ENCODE measurements at regions of chr3 and their contacts with region 1.

Region 1: DNA sequence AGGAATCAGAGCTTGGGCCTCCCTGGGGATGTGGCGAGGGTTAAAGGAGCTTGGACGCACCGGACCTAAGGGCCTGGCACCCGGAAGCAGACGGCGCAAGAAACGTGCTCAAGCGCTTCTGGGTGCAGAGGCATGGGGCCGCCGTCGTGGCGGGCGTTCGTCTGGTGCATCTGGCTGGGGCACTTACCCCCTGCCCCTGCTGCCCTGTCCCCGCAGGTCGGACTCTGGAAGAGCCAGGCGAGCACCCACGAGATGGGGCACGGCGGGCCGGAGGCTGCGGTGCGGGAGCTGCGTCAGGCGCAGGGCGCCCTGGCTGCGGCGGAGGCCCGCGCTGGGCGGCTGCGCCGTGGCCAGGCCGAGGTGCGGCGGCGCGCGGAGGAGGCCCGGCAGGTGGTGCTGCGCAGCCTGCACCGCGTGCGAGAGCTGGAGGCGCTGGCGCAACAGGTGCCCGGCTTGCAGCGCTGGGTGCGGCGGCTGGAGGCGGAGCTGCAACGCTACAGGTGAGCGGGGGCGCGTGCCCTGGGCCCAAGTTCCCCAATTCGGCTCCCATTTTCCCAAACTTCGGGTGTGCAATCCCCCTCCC is 2.6 kb downstream of the EFCC1 start:
- DNase-seq: peak in 2 of 3 donors; percentile 65 to 81
- H3K4me3 ChIP-seq: peak overlapping the region in 5 of 7 experiments; percentile 16 to 88 (median 54)
- H3K27ac ChIP-seq: no peak overlapping the region
- H3K4me1 ChIP-seq: peaks cover 5 to 70% (median 62%) of the 10 kb centered on the region in 4 experiments
- H3K27me3 ChIP-seq: no peaks in the 10 kb centered on the region

Region 2: GRCh38 chr3:128993461-128994173 is 10.1 kb before region 1 on chr3 and contains the start of gene CFAP92:
- CTCF ChIA-PET with region 1: interaction called, 195 read pairs
- POLR2A ChIA-PET with region 1: no interaction called
- DNase-seq: peak; percentile 78 to 91 (median 90)
- H3K4me3 ChIP-seq: peak within 1 kb of the TSS in 5 of 7 experiments; percentile 31 to 76 (median 55)
- H3K27ac ChIP-seq: no peak within 1 kb of the TSS
- H3K4me1 ChIP-seq: peaks cover 15 to 54% (median 43%) of the 10 kb centered on the region in 4 experiments
- H3K27me3 ChIP-seq: no peaks in the 10 kb centered on the region

Region 3: DNA sequence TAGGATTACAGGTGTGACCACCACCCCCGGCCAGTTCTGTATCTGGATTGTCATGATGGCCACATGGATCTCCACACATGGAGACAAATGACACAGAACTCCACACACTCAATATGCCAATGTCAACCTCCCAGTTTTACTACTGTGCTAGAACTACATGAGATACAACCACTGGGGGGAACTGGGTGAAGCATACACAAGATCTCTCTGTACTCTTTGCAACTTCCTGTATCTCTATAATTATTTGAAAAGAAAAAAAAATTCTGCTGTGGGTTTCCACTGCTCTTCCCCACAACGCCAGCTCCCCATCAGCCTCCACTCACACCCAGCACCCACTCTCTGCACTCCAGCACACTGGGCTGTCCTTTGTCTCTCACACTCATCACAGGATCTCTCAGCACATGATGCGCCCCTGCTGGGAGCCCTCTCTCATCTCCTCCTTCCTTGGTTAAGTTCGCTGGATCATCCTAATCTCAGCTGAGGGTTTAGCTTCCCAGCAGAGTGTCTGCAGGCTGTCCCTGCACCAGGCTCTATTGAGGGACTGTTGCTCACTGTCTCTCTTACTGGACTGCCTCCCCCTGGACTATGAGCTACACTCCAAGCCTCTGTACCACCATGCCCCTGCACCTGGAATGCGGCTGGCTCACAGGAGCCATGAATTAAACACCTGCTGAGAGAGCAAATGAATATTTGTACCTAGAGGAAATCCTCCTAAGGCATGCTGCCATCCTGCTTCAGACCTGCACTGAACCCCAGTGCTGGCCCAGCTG is 128.6 kb after region 1 on chr3:
- CTCF ChIA-PET with region 1: no interaction called
- POLR2A ChIA-PET with region 1: no interaction called
- DNase-seq: no peak
- H3K4me3 ChIP-seq: no peak overlapping the region
- H3K27ac ChIP-seq: no peak overlapping the region
- H3K4me1 ChIP-seq: peaks cover 0 to 11% (median 11%) of the 10 kb centered on the region in 4 experiments
- H3K27me3 ChIP-seq: no peaks in the 10 kb centered on the region

Measured in common myeloid progenitor, CD34-positive (primary cell).